Prostate gland (tissue), 2 donors: ENCODE measurements at regions of chr1 and their contacts with region 1.

Region 1: GRCh38 chr1:47449822-47450552 is 12.1 kb downstream of the FOXD2 start:
- DNase-seq: peak; percentile 22
- H3K4me3 ChIP-seq: no peak overlapping the region
- H3K27ac ChIP-seq: no peak overlapping the region
- H3K4me1 ChIP-seq: no peaks in the 10 kb centered on the region
- H3K27me3 ChIP-seq: peaks cover 19% of the 10 kb centered on the region
- CTCF ChIP-seq: peak in 2 of 4 experiments; percentile 55 to 68
- POLR2A ChIP-seq: no peak

Region 2: GRCh38 chr1:47491341-47491753 is 41.4 kb after region 1 on chr1:
- intact Hi-C with region 1: no loop called
- DNase-seq: no peak
- H3K4me3 ChIP-seq: no peak overlapping the region
- H3K27ac ChIP-seq: no peak overlapping the region
- H3K4me1 ChIP-seq: no peaks in the 10 kb centered on the region
- H3K27me3 ChIP-seq: peaks cover 8% of the 10 kb centered on the region
- CTCF ChIP-seq: no peak
- POLR2A ChIP-seq: no peak

Region 3: GRCh38 chr1:47507881-47508701 is 58.1 kb after region 1 on chr1:
- intact Hi-C with region 1: loop called (anchors 10 kb)
- DNase-seq: peak; percentile 27
- H3K4me3 ChIP-seq: peak overlapping the region; percentile 35 to 41
- H3K27ac ChIP-seq: peak overlapping the region; percentile 44 to 56
- H3K4me1 ChIP-seq: no peaks in the 10 kb centered on the region
- H3K27me3 ChIP-seq: no peaks in the 10 kb centered on the region
- CTCF ChIP-seq: no peak
- POLR2A ChIP-seq: no peak